IMR-90 (cell line): ENCODE measurements at regions of chr2 and their contacts with region 1.

Region 1: GRCh38 chr2:147331790-147332419 is 512.9 kb upstream of the ACVR2A start:
- DNase-seq: no peak
- ATAC-seq: no peak
- H3K4me3 ChIP-seq: no peak overlapping the region
- H3K27ac ChIP-seq: no peak overlapping the region
- H3K4me1 ChIP-seq: no peaks in the 10 kb centered on the region
- H3K27me3 ChIP-seq: no peaks in the 10 kb centered on the region
- CTCF ChIP-seq: no peak
- POLR2A ChIP-seq: no peak
- RAD21 ChIP-seq: no peak

Region 2: GRCh38 chr2:146734042-146734820 is 597.7 kb before region 1 on chr2:
- CTCF ChIA-PET with region 1: no interaction called
- POLR2A ChIA-PET with region 1: no interaction called
- dilution Hi-C with region 1: no loop called
- in situ Hi-C with region 1: no loop called
- intact Hi-C with region 1: loop called (anchors 5 kb)
- DNase-seq: peak; percentile 41
- ATAC-seq: peak; percentile 83
- H3K4me3 ChIP-seq: no peak overlapping the region
- H3K27ac ChIP-seq: no peak overlapping the region
- H3K4me1 ChIP-seq: no peaks in the 10 kb centered on the region
- H3K27me3 ChIP-seq: no peaks in the 10 kb centered on the region
- CTCF ChIP-seq: peak; percentile 46
- POLR2A ChIP-seq: no peak
- RAD21 ChIP-seq: peak; percentile 51